Common myeloid progenitor, CD34-positive (primary cell): ENCODE measurements at regions of chr20 and their contacts with region 1.

Region 1: DNA sequence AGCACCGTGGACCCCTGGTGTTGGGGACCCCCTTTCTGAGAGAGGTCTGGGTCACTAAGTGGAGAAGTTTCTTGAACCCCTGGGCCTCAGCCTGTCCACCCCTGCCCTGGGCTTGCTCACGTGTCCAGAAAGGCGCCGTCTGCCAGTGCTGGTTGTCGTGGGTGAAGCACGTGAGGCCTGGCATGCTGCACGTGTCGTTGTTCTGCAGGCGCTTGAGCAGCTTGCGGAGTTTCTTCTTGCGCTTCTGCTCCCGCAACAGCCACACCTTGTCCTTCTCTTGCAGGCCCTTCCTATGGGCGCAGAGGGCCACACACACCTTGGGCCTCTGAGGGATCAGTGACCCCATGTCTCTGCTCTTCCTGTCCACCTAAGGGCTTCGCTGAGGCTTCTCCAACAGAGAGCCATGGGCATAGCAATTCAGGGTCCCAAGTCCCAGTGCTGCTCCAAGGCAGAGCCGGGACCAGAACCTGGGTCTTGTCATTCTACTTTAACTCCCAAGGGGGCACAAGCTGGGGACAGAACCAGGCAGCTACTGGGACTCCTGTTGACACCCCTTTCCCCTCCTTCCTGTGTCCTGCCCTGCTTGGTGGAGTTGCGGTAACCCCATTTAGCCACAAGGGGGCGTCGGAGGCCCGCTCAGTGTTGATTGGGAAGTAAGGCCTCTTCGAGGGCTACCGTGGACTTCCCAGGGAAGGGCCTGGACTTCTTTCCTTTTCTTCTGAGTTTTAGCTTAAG is 121.8 kb downstream of the SULF2 start:
- DNase-seq: peak; percentile 60 to 74 (median 62)
- H3K4me3 ChIP-seq: no peak overlapping the region
- H3K27ac ChIP-seq: no peak overlapping the region
- H3K4me1 ChIP-seq: peaks cover 0 to 14% (median 7%) of the 10 kb centered on the region in 4 experiments
- H3K27me3 ChIP-seq: no peaks in the 10 kb centered on the region

Region 2: DNA sequence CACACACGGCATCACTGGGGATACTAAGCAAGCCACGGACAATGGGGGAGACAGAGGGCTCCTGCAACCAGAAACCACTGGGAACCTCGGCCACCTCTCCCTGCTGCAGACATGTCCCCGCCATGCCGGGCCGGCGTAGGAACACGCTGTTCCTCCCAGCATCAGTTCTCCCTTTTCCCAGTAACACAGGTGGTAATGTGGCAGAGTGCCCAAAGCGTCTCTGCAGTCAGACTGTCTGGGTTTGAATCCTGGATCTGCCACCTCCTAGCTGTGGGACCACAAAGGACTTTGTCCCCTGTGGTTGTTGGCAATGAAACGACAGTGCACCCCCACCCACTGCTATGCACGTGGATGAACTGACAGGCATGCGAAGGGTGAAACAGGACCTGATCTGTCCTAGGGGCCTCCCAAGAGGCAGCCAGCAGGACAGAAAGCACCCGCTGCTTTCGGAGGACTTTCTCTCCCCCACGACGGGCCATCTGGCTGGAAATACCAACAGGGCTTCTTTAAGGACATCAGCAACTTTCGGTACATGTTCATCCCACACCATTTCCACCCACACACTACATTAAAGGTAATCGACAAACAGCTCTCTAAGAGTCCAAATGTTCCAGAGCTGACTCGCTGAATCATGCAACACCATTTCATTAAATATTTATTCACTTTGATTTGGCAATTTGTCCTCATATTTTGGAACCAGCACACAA is 47.7 kb after region 1 on chr20:
- CTCF ChIA-PET with region 1: no interaction called
- POLR2A ChIA-PET with region 1: no interaction called
- DNase-seq: peak in 2 of 3 donors; percentile 24 to 29
- H3K4me3 ChIP-seq: peak overlapping the region in 1 of 7 experiments; percentile 14
- H3K27ac ChIP-seq: no peak overlapping the region
- H3K4me1 ChIP-seq: peaks cover 0 to 29% (median 15%) of the 10 kb centered on the region in 4 experiments
- H3K27me3 ChIP-seq: no peaks in the 10 kb centered on the region

Region 3: GRCh38 chr20:48620519-48621254 is 957.2 kb after region 1 on chr20:
- CTCF ChIA-PET with region 1: interaction called, 41 read pairs
- POLR2A ChIA-PET with region 1: no interaction called
- DNase-seq: peak; percentile 60 to 78 (median 76)
- H3K4me3 ChIP-seq: peak overlapping the region in 3 of 7 experiments; percentile 46 to 69 (median 59)
- H3K27ac ChIP-seq: no peak overlapping the region
- H3K4me1 ChIP-seq: peaks cover 0 to 20% (median 12%) of the 10 kb centered on the region in 4 experiments
- H3K27me3 ChIP-seq: peaks cover 0 to 18% (median 3%) of the 10 kb centered on the region in 5 experiments